A673 (cell line): ENCODE measurements at regions of chr6 and their contacts with region 1.

Region 1: GRCh38 chr6:47413752-47414422 is 63.7 kb upstream of the CD2AP start:
- DNase-seq: peak; percentile 75
- H3K4me3 ChIP-seq: peak overlapping the region; percentile 37
- H3K27ac ChIP-seq: no peak overlapping the region
- H3K4me1 ChIP-seq: peaks cover 4% of the 10 kb centered on the region
- H3K27me3 ChIP-seq: no peaks in the 10 kb centered on the region
- CTCF ChIP-seq: peak; percentile 91

Region 2: GRCh38 chr6:47247227-47247797 is 166.6 kb before region 1 on chr6:
- CTCF ChIA-PET with region 1: no interaction called
- POLR2A ChIA-PET with region 1: no interaction called
- intact Hi-C with region 1: no loop called
- DNase-seq: no peak
- H3K4me3 ChIP-seq: no peak overlapping the region
- H3K27ac ChIP-seq: no peak overlapping the region
- H3K4me1 ChIP-seq: peaks cover 37% of the 10 kb centered on the region
- H3K27me3 ChIP-seq: no peaks in the 10 kb centered on the region
- CTCF ChIP-seq: no peak

Region 3: DNA sequence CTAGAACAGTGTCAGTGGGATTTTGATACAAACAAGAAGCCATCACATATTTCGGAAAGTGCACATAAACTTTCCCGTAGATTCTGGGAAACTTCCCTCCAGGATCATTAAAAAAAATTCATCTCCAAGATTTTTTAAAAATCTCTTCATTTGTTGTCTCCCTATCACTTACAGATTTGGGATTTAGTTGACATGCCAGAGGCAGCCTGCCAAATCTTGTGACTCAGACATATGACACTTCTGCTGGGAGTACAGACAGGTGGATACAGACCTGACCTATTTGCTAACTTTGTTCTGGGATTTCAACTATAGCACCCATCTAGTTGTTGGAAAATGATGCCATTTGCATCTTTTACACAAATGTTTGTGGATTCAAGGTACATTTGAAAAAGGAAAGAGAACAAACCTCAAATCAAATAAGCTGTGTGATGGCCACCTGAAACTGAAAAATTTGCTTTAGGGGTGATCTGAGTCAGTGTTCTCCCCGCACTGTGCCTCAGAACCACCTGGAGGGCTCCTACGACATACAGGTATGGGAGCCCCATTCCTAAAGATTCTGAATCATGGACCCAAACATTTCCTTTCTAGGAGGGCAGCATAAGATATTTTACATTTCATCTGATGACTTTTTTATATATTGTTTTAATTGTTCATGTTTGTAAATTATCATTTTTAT is 41.8 kb after region 1 on chr6:
- CTCF ChIA-PET with region 1: no interaction called
- POLR2A ChIA-PET with region 1: no interaction called
- intact Hi-C with region 1: no loop called
- DNase-seq: no peak
- H3K4me3 ChIP-seq: no peak overlapping the region
- H3K27ac ChIP-seq: no peak overlapping the region
- H3K4me1 ChIP-seq: no peaks in the 10 kb centered on the region
- H3K27me3 ChIP-seq: no peaks in the 10 kb centered on the region
- CTCF ChIP-seq: no peak

Region 4: DNA sequence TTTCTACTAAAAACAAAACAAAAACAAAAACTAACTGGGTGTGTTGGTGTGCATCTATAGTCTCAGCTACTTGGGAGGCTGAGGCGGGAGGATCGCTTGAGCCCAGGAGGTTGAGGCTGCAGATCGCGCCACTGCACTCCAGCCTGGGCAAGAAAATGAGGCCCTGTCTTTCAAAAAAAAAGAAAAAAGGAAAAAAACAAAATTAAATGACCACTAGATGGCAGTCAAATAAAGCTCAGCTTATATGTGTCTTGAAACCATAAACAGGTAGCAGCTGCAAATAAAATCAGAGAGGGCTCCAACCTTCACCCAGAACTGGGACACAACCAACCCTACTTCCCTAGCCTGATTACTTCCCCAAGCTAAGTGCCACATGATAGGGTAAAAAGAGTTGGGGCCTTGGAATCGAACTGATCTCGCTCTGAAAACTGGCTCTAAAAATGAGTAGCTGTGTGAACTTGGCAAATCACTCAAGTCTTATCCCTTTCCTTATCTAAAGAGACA is 217.4 kb after region 1 on chr6:
- CTCF ChIA-PET with region 1: interaction called, 3 read pairs
- POLR2A ChIA-PET with region 1: no interaction called
- intact Hi-C with region 1: loop called (anchors 5 kb)
- DNase-seq: peak; percentile 77
- H3K4me3 ChIP-seq: no peak overlapping the region
- H3K27ac ChIP-seq: no peak overlapping the region
- H3K4me1 ChIP-seq: peaks cover 14% of the 10 kb centered on the region
- H3K27me3 ChIP-seq: no peaks in the 10 kb centered on the region
- CTCF ChIP-seq: peak; percentile 66

Region 5: DNA sequence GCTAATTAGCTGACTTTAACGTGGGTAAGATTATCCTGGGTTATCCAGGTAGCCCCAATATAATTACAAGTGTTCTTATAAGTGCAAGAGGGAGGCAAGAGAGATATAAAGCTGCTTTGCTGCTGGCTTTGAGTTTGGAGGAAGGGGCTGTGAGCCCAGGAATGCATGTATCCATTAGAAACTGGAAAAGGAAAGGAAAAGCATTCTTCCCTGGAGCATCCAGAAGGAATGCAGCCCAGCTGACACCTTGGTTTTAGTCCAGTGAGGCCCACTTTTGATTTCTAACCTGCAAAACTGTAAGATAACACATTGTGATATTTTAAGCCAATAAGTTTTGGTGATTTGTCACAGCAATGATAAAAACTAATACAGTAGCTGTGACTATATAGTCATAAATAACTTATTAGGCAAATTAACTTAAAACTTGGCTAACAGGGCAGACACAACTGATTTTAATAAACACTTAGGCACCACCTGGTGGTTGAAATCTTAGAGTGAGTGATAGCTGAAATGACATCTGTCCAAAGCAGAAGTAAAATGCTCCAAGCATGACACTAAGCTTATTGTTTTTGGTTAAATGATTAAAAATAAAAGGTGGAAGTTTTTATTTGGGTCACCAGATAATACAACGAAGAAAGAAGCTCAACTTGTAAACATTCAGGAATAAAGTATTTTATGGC is 320.1 kb after region 1 on chr6:
- CTCF ChIA-PET with region 1: no interaction called
- POLR2A ChIA-PET with region 1: no interaction called
- intact Hi-C with region 1: loop called (anchors 2 kb)
- DNase-seq: peak; percentile 35
- H3K4me3 ChIP-seq: no peak overlapping the region
- H3K27ac ChIP-seq: no peak overlapping the region
- H3K4me1 ChIP-seq: no peaks in the 10 kb centered on the region
- H3K27me3 ChIP-seq: no peaks in the 10 kb centered on the region
- CTCF ChIP-seq: peak; percentile 61

Region 6: GRCh38 chr6:47780510-47781356 is 366.8 kb after region 1 on chr6:
- CTCF ChIA-PET with region 1: no interaction called
- POLR2A ChIA-PET with region 1: no interaction called
- intact Hi-C with region 1: loop called (anchors 2 kb)
- DNase-seq: peak; percentile 68
- H3K4me3 ChIP-seq: no peak overlapping the region
- H3K27ac ChIP-seq: no peak overlapping the region
- H3K4me1 ChIP-seq: no peaks in the 10 kb centered on the region
- H3K27me3 ChIP-seq: peaks cover 9% of the 10 kb centered on the region
- CTCF ChIP-seq: peak; percentile 74

Region 7: GRCh38 chr6:48844696-48845095 is 1430.8 kb after region 1 on chr6:
- CTCF ChIA-PET with region 1: no interaction called
- POLR2A ChIA-PET with region 1: no interaction called
- intact Hi-C with region 1: no loop called
- DNase-seq: no peak
- H3K4me3 ChIP-seq: no peak overlapping the region
- H3K27ac ChIP-seq: no peak overlapping the region
- H3K4me1 ChIP-seq: no peaks in the 10 kb centered on the region
- H3K27me3 ChIP-seq: no peaks in the 10 kb centered on the region
- CTCF ChIP-seq: no peak